Mammary epithelial cell (primary cell): ENCODE measurements at regions of chr12 and their contacts with region 1.

Region 1: DNA sequence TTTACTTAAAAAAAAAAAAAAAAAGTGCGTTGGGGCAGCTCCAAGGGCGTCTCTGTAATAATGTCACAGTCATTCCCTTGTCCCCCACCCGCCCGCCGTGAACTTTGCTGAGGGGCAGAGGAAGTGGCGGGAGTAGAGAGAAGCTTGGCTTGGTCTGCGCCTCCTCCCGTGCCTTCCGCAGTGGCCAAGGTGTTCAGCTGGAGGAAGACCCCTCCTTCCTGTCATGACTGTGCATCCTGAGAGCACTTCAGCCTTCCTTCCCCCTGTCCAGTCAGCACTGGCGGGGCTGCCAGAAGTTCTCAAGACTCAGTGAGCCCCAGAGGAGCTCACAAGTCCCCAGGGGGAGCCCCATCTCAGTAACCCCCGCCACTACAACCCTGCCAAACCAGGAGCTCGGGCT is 32.2 kb downstream of the AACS start:
- DNase-seq: no peak
- H3K4me3 ChIP-seq: no peak overlapping the region
- H3K27ac ChIP-seq: no peak overlapping the region
- H3K4me1 ChIP-seq: peaks cover 7% of the 10 kb centered on the region
- H3K27me3 ChIP-seq: no peaks in the 10 kb centered on the region
- CTCF ChIP-seq: no peak

Region 2: GRCh38 chr12:124837958-124838803 is 259.2 kb before region 1 on chr12:
- CTCF ChIA-PET with region 1: no interaction called
- dilution Hi-C with region 1: no loop called
- in situ Hi-C with region 1: no loop called
- intact Hi-C with region 1: no loop called
- DNase-seq: peak; percentile 98
- H3K4me3 ChIP-seq: no peak overlapping the region
- H3K27ac ChIP-seq: no peak overlapping the region
- H3K4me1 ChIP-seq: peaks cover 19% of the 10 kb centered on the region
- H3K27me3 ChIP-seq: no peaks in the 10 kb centered on the region
- CTCF ChIP-seq: no peak

Region 3: GRCh38 chr12:124979568-124979967 is 117.9 kb before region 1 on chr12:
- CTCF ChIA-PET with region 1: no interaction called
- dilution Hi-C with region 1: loop called (anchors 5 kb)
- in situ Hi-C with region 1: no loop called
- intact Hi-C with region 1: no loop called
- DNase-seq: no peak
- H3K4me3 ChIP-seq: no peak overlapping the region
- H3K27ac ChIP-seq: no peak overlapping the region
- H3K4me1 ChIP-seq: no peaks in the 10 kb centered on the region
- H3K27me3 ChIP-seq: no peaks in the 10 kb centered on the region
- CTCF ChIP-seq: no peak

Region 4: DNA sequence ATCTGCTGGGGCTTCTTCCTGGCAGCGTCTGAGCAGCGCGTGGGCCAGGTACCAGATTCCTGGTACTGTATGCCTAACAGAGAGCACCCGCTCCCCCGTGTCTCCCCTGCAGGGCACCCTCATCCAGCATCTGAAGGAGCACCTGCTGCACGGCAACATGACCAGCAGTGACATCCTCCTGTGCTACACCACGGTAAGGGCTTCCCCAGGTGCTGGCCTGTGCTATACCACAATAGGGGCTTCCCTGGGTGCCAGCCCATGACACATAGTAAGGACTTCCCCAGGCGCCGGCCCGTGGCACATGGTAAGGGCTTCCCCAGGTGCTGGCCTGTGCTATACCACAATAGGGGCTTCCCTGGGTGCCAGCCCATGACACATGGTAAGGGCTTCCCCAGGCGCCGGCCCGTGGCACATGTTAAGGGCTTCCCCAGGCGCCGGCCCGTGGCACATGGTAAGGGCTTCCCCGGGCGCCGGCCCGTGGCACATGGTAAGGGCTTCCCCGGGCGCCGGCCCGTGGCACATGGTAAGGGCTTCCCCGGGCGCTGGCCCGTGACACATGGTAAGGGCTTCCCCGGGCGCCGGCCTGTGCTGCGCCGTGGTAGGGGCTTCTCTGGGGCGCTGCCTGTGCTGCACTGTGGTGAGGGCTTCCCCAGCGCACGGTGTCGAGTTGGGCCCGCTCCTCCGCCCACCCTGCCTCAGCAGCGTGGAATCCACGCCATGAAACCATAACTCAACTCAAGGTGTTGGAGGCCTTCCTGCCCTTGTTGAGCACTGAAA is 17.1 kb after region 1 on chr12:
- CTCF ChIA-PET with region 1: no interaction called
- dilution Hi-C with region 1: no loop called
- in situ Hi-C with region 1: no loop called
- intact Hi-C with region 1: no loop called
- DNase-seq: no peak
- H3K4me3 ChIP-seq: no peak overlapping the region
- H3K27ac ChIP-seq: no peak overlapping the region
- H3K4me1 ChIP-seq: no peaks in the 10 kb centered on the region
- H3K27me3 ChIP-seq: no peaks in the 10 kb centered on the region
- CTCF ChIP-seq: no peak